Caco-2 (cell line): ENCODE measurements at regions of chr12 and their contacts with region 1.

Region 1: DNA sequence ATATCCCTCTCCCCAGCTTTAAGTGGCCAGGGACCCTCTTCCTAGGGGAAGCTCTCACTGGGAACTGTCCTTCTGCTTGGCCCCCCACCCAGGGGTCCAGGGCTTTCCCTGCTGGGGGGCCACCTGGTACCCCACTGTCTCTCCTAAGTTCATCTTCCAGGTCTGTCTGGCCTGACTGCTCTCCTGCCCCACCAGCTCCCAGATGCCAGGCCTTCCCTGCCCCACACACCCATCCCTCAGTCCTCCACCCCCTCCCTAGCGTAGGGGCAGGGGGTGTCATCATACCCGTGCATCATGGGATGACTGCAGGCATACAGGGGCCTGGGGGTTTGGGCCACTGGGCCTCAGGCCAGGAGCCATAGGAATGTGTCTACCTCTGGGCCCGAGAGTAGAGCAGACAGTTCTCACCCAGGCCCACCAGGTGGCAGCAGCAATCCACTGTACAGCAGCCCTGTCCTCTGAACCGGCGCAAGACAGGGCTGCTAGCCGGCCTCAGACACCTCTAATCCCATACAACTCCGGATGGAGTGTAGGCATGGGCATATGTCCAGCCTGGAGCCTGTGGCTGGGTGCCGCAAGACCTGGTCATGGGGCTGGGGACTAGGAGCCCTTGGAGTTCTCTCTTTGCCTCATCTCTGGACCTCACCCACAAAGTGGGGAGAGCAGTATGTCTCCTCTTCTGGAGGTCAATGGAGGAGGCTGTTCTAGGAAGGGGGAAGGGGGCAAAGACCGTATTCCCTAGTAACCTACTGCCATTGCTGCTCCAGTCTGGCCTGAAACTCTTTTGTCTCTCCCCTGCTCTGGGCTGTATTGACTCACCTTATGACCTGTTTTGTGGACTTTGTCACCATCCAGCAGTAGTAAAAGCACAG is 10.0 kb upstream of the SMARCD1 start:
- DNase-seq: peak; percentile 91 to 95
- H3K4me3 ChIP-seq: no peak overlapping the region
- H3K4me3 Mint-ChIP-seq: peak overlapping the region; percentile 36
- H3K27ac Mint-ChIP-seq: peak overlapping the region; percentile 66
- H3K4me1 ChIP-seq: peaks cover 20% of the 10 kb centered on the region
- H3K4me1 Mint-ChIP-seq: peaks cover 21% of the 10 kb centered on the region
- H3K27me3 ChIP-seq: no peaks in the 10 kb centered on the region
- H3K27me3 Mint-ChIP-seq: no peaks in the 10 kb centered on the region
- CTCF ChIP-seq: peak; percentile 95 to 97

Region 2: DNA sequence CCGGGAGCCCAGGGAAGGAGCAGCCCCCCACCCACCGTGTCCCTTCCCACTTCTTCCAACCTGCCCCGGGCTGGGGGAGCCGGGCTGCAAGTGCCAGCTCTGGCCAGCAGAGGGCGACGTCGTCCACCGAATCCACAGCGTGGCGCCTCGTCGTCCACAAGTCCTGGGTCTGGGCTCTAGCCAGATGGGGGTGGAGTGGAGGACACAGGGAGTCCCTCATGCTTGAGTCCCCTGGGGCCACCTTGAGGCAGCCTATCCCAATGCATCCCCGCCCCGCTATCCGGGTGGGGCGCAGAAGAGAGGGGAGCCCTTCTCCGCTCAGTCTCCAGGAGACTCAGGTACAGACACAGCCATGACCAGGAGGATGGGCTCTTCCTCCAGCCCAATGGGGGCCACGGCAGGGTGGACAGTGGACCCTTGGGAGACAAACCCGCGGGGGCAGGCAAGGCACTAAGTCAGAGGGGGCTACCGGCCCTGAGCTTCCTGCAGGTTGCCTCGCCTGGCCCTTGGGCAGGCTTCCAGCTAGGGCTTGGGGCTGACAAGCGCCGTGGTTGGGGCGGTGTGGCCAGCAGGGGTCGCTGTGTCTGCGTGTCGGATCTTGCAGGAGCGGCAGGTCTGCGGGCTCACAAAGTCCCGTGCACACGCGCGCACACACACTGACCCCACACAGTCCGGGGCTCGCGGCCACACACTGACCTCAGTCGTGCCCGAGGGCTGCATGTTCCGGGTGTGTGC is 108.0 kb before region 1 on chr12:
- CTCF ChIA-PET with region 1: interaction called, 78 read pairs
- POLR2A ChIA-PET with region 1: no interaction called
- intact Hi-C with region 1: loop called (anchors 1 kb)
- DNase-seq: peak; percentile 88 to 92
- H3K4me3 ChIP-seq: peak overlapping the region; percentile 18
- H3K4me3 Mint-ChIP-seq: peak overlapping the region; percentile 34
- H3K27ac Mint-ChIP-seq: peak overlapping the region; percentile 33
- H3K4me1 ChIP-seq: peaks cover 20% of the 10 kb centered on the region
- H3K4me1 Mint-ChIP-seq: no peaks in the 10 kb centered on the region
- H3K27me3 ChIP-seq: no peaks in the 10 kb centered on the region
- H3K27me3 Mint-ChIP-seq: no peaks in the 10 kb centered on the region
- CTCF ChIP-seq: peak; percentile 94 to 98

Region 3: DNA sequence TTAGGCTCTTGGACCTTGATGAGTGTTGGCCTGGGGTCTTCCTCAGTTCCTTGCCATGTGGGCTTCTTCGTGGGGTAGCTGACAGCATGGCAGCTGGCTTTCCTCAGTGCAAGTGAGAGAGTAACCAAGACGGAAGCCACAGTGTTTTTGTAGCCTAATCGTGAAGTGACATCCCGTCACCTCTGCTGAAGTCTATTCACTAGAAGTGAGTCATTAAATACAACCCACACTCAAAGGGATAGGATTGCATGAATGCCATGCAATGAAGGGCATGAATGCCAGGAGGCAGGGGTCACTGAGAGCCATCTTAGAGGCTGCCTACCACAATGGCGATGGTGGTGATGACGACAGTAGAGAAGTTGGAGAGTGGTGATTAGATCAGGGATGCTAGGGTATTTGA is 31.3 kb before region 1 on chr12:
- CTCF ChIA-PET with region 1: interaction called, 93 read pairs
- POLR2A ChIA-PET with region 1: interaction called, 4 read pairs
- intact Hi-C with region 1: loop called (anchors 1 kb)
- DNase-seq: peak in 1 of 2 experiments; percentile 17
- H3K4me3 ChIP-seq: no peak overlapping the region
- H3K4me3 Mint-ChIP-seq: no peak overlapping the region
- H3K27ac Mint-ChIP-seq: no peak overlapping the region
- H3K4me1 ChIP-seq: peaks cover 9% of the 10 kb centered on the region
- H3K4me1 Mint-ChIP-seq: peaks cover 11% of the 10 kb centered on the region
- H3K27me3 ChIP-seq: no peaks in the 10 kb centered on the region
- H3K27me3 Mint-ChIP-seq: no peaks in the 10 kb centered on the region
- CTCF ChIP-seq: no peak

Region 4: DNA sequence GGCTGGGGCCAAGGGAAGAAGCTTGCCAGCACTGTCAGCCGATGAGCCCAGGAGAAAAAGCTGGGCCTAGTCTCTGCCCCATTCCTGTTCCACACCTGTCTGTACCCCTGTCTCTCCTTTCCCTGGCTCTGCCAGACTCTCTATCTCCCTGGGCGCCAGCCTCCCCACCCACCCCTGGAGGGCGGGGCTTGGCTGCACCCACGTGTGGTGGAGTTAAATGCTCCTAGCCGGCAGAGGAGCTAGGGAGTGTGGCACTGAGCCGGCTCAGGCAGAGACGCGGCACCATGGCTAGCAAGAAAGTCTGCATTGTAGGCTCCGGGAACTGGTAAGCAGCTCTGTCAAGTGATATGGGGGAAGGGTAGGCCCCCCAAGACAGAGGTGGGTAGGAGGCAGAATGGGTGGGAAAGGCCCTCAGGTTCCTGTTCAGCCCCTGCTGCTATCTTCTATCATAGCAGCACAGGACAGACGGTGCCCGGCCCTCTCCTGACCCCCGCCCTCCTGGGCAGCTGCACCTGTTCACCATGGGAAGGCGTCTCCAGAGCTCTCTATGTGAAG is 28.7 kb after region 1 on chr12 and contains the start of gene GPD1:
- CTCF ChIA-PET with region 1: interaction called, 4 read pairs
- POLR2A ChIA-PET with region 1: interaction called, 3 read pairs
- intact Hi-C with region 1: loop called (anchors 1 kb)
- DNase-seq: no peak
- H3K4me3 ChIP-seq: no peak within 1 kb of the TSS
- H3K4me3 Mint-ChIP-seq: no peak within 1 kb of the TSS
- H3K27ac Mint-ChIP-seq: peak within 1 kb of the TSS; percentile 35
- H3K4me1 ChIP-seq: peaks cover 30% of the 10 kb centered on the region
- H3K4me1 Mint-ChIP-seq: peaks cover 19% of the 10 kb centered on the region
- H3K27me3 ChIP-seq: no peaks in the 10 kb centered on the region
- H3K27me3 Mint-ChIP-seq: no peaks in the 10 kb centered on the region
- CTCF ChIP-seq: no peak
- total RNA-seq, gene GPD1: 1.5 and 1.9 TPM in 2 replicates

Region 5: GRCh38 chr12:50167041-50167828 is 92.1 kb after region 1 on chr12 and contains the start of gene CERS5:
- CTCF ChIA-PET with region 1: interaction called, 11 read pairs
- POLR2A ChIA-PET with region 1: no interaction called
- intact Hi-C with region 1: loop called (anchors 2 kb)
- DNase-seq: peak; percentile 99 to 100
- H3K4me3 ChIP-seq: peak within 1 kb of the TSS; percentile 63
- H3K4me3 Mint-ChIP-seq: peak within 1 kb of the TSS; percentile 80
- H3K27ac Mint-ChIP-seq: peak within 1 kb of the TSS; percentile 77
- H3K4me1 ChIP-seq: peaks cover 11% of the 10 kb centered on the region; the same call in 1 of the 2 replicates
- H3K4me1 Mint-ChIP-seq: peaks cover 8% of the 10 kb centered on the region
- H3K27me3 ChIP-seq: no peaks in the 10 kb centered on the region
- H3K27me3 Mint-ChIP-seq: no peaks in the 10 kb centered on the region
- CTCF ChIP-seq: peak in 1 of 2 experiments; percentile 64
- total RNA-seq, gene CERS5: 61.6 and 62.6 TPM in 2 replicates

Region 6: DNA sequence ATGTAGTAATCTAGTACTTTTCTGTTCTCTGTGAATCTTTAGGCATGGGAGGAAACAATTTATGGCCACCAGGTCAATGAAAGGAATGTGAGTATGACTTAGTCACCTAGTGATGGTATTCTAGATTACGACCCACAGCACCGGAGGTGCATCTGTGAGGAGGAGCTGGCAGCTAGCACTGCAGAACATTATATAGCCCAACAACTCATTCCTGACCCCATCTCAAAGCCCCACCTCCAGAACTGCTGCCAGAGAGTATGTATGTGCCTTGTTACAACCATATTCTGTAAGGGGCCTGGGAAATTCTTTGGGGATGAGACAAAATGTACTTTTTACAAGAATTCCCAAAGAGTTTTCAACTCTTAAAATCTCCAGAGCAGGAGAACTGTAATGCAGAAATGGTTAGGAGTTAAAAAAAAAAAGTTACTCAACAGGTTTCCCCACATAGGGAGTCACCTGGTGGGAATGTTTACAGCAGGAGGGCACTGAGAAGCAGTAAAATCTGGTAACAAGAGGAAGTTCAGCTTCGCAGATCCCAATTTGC is 126.9 kb after region 1 on chr12:
- CTCF ChIA-PET with region 1: no interaction called
- POLR2A ChIA-PET with region 1: no interaction called
- intact Hi-C with region 1: no loop called
- DNase-seq: peak; percentile 83 to 89
- H3K4me3 ChIP-seq: no peak overlapping the region
- H3K4me3 Mint-ChIP-seq: peak overlapping the region; percentile 74
- H3K27ac Mint-ChIP-seq: peak overlapping the region; percentile 95
- H3K4me1 ChIP-seq: peaks cover 40% of the 10 kb centered on the region
- H3K4me1 Mint-ChIP-seq: peaks cover 34% of the 10 kb centered on the region
- H3K27me3 ChIP-seq: no peaks in the 10 kb centered on the region
- H3K27me3 Mint-ChIP-seq: no peaks in the 10 kb centered on the region
- CTCF ChIP-seq: peak in 1 of 2 experiments; percentile 14